ENCODE measurements at regions of chr3 and their contacts with region 1.

Region 1: GRCh38 chr3:186783073-186783730 is at the start of gene EIF4A2:
- DNase-seq: peak; percentile 88 to 94 (median 92)
- ATAC-seq: peak; percentile 81
- H3K4me3 ChIP-seq: peak within 1 kb of the TSS; percentile 81
- H3K27ac ChIP-seq: peak within 1 kb of the TSS; percentile 99
- H3K4me1 ChIP-seq: peaks cover 4 to 16% of the 10 kb centered on the region in 2 experiments; a peak in 4 of 5 replicates
- H3K27me3 ChIP-seq: no peaks in the 10 kb centered on the region
- CTCF ChIP-seq: 0 out of 6 replicates have a peak, but pooled peaks of 1 of the 3 experiments have one; percentile 4
- EP300 ChIP-seq: peak; percentile 13; the same call in 1 of the 2 replicates
- POLR2A ChIP-seq: peak; percentile 100
- RAD21 ChIP-seq: no peak
- polyA plus RNA-seq, gene EIF4A2: 329 to 333 TPM

Region 2: DNA sequence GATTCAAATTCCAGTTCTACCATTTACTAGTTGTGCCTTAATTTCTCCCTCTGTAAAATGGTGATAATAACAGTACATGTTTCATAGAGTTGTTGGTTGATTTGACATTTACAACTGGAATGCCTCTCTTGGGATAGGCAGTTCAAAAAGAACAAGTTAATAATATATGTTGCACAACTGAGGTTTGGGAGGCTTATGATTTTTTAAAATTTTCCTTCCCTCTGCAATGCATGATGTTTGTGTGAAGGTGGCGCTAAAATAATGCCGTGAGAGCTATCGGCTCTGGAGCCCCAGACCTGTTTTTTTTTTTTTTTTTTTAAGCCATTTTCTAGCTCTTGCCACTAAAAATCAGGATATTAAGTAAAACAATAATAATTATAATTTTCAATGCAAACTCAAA is 194.1 kb before region 1 on chr3:
- CTCF ChIA-PET with region 1: no interaction called
- POLR2A ChIA-PET with region 1: interaction called, 23 read pairs
- in situ Hi-C with region 1: no loop called
- intact Hi-C with region 1: no loop called
- DNase-seq: peak; percentile 32 to 46 (median 34)
- ATAC-seq: peak; percentile 71
- H3K4me3 ChIP-seq: no peak overlapping the region
- H3K27ac ChIP-seq: no peak overlapping the region
- H3K4me1 ChIP-seq: peaks cover 0 to 26% of the 10 kb centered on the region in 2 experiments; a peak in 3 of 5 replicates
- H3K27me3 ChIP-seq: no peaks in the 10 kb centered on the region
- CTCF ChIP-seq: peak; percentile 52 to 81 (median 63)
- EP300 ChIP-seq: no peak
- POLR2A ChIP-seq: no peak
- RAD21 ChIP-seq: peak; percentile 50 to 59

Region 3: DNA sequence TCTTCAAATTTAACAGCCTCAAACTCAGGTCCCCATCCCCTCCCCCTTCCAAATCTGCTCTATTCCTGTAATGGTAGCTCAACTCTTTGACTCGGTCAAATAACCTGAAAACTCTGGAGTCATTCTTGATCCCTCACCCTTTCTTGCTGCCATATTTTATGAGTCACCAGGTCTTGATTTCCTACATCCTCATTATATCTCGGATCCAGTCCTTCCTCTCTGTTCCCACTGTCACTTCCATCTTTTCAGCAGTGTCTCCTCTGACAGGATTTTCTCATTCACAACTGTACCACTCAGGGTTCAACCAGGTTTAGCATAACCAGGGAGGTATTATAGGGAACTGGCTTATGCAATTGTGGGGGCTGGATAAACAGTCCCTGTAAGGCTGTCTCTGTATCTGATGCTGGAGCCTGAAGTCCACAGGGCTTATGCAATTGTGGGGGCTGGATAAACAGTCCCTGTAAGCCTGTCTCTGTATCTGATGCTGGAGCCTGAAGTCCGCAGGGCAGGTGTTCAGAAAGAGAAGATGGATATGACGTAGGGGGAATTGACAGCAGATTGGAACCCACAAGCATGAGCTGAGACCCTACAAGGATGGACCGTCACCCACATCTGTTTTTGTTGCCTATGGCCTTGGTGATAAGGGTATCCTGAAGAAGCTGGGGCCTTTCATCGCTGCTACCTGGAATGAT is 152.1 kb before region 1 on chr3:
- CTCF ChIA-PET with region 1: no interaction called
- POLR2A ChIA-PET with region 1: interaction called, 12 read pairs
- in situ Hi-C with region 1: no loop called
- intact Hi-C with region 1: no loop called
- DNase-seq: no peak
- ATAC-seq: peak; percentile 61
- H3K4me3 ChIP-seq: no peak overlapping the region
- H3K27ac ChIP-seq: no peak overlapping the region
- H3K4me1 ChIP-seq: peaks cover 3 to 4% of the 10 kb centered on the region in 2 experiments; a peak in 3 of 5 replicates
- H3K27me3 ChIP-seq: peaks cover 0 to 19% of the 10 kb centered on the region in 2 experiments; a peak in 2 of 5 replicates
- CTCF ChIP-seq: no peak
- EP300 ChIP-seq: no peak
- POLR2A ChIP-seq: no peak
- RAD21 ChIP-seq: no peak

Region 4: DNA sequence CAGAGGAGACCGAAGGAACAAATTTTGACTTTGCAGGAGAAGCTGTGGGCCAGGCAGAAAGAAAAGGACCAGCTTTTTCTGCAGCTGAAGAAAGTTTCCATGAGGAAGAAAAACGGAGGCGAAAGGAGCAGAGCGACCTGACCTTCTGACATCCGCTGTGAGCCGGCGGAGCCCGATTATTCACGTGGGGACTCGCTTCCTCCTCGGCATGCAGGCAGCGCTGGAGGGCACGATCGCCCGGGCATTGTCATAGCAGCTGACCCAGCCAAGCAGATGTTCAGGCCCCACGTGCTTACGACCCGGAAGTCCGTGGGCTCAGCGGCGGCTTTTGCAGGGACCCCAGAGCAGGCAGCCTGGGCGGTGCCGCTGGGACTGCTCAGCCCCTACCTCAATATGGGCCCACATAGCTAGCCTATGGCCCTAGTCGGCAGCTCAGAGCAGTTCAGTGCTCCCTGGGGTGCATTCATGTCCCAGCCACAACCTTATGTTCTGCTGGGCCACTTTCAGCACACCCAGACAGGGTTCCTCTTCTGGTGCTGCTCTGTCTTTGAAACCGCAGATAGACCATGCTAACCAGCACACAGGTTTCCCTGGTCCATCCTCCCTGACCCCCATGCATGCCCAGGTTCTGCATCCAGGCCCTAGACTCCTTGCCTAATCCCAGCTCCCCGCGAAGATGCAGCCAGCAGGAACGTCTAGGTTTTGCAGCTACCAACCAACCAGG is 10.3 kb before region 1 on chr3:
- CTCF ChIA-PET with region 1: no interaction called
- POLR2A ChIA-PET with region 1: interaction called, 68 read pairs
- in situ Hi-C with region 1: no loop called
- intact Hi-C with region 1: no loop called
- DNase-seq: no peak
- ATAC-seq: peak; percentile 27
- H3K4me3 ChIP-seq: no peak overlapping the region
- H3K27ac ChIP-seq: no peak overlapping the region
- H3K4me1 ChIP-seq: peaks cover 0 to 13% of the 10 kb centered on the region in 2 experiments; a peak in 2 of 5 replicates
- H3K27me3 ChIP-seq: peaks cover 0 to 10% of the 10 kb centered on the region in 2 experiments; a peak in 2 of 5 replicates
- CTCF ChIP-seq: no peak
- EP300 ChIP-seq: no peak
- POLR2A ChIP-seq: no peak
- RAD21 ChIP-seq: no peak

Region 5: DNA sequence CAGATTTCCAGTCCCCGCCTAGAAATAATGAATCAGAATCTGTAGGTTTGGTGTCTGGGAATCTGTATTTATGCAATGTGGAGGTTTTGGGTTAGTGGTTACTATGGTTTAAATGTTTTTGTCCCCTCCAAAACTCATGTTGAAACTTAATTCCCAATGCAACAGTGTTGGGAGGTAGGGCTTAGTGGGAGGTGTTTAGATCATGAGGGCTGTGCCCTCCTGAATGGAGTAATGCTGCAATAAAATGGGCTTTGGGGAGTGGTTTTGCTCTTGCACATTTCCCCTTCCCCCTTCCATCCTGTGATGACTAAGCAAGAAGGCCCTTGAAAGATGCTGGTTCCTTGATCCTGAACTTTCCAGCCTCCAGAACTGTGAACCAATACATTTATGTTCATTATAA is 32.2 kb after region 1 on chr3:
- CTCF ChIA-PET with region 1: no interaction called
- POLR2A ChIA-PET with region 1: interaction called, 11 read pairs
- in situ Hi-C with region 1: no loop called
- intact Hi-C with region 1: no loop called
- DNase-seq: peak in 2 of 4 experiments; percentile 54 to 71
- ATAC-seq: peak; percentile 82
- H3K4me3 ChIP-seq: no peak overlapping the region
- H3K27ac ChIP-seq: no peak overlapping the region
- H3K4me1 ChIP-seq: peaks cover 0 to 10% of the 10 kb centered on the region in 2 experiments; a peak in 4 of 5 replicates
- H3K27me3 ChIP-seq: no peaks in the 10 kb centered on the region
- CTCF ChIP-seq: no peak
- EP300 ChIP-seq: 0 out of 2 replicates have a peak, but pooled peaks have one; percentile 27
- POLR2A ChIP-seq: no peak
- RAD21 ChIP-seq: no peak